ENCODE measurements at regions of chr7 and their contacts with region 1.

Region 1: DNA sequence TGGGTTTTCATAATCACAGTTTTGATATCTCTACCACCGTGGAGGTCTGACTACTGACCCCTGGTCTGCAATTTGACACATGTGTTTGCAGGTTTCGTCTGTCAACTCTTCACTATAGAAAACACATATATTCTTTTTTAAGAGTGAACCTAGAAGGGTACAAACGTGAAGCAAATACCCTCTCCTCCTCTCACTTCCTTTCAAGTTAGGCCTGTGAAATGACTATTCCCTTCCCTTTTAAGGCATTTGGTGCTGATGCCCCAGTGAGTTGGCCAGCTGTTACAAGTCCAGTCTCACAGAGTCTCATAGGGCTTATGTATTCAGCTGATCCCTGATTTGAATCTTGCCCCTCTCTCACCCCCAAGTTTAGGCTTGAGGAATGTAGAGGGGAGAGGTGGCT is 742.0 kb upstream of the IGFBP3 start:
- DNase-seq: no peak
- H3K4me3 ChIP-seq: no peak overlapping the region
- CTCF ChIP-seq: no peak
- POLR2A ChIP-seq: no peak

Region 2: DNA sequence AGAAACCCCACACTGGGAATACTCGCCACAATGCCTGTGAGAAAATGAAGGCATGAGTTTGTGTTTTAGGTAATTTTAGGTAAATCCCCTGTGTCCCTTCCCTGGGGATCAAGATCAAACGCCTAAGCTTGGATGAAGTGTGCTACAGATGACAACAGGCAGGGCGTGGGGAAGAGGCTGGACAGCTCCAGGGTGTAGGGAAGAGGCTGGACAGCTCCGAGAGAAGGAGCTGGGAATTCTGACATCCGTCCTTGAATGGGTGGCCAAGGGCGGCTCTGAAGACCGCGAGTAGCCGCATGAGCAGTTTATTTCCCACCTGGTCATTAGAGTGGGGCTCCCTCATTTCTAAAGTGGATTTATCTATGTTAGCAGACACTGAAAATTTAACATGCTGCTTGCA is 1395.8 kb before region 1 on chr7:
- intact Hi-C with region 1: no loop called
- DNase-seq: no peak
- H3K4me3 ChIP-seq: no peak overlapping the region
- CTCF ChIP-seq: no peak
- POLR2A ChIP-seq: no peak

Region 3: GRCh38 chr7:46725838-46726237 is 62.8 kb after region 1 on chr7:
- intact Hi-C with region 1: loop called (anchors 2 kb)
- DNase-seq: no peak
- H3K4me3 ChIP-seq: no peak overlapping the region
- CTCF ChIP-seq: no peak
- POLR2A ChIP-seq: no peak